ENCODE measurements at regions of chr2 and their contacts with region 1.

Region 1: DNA sequence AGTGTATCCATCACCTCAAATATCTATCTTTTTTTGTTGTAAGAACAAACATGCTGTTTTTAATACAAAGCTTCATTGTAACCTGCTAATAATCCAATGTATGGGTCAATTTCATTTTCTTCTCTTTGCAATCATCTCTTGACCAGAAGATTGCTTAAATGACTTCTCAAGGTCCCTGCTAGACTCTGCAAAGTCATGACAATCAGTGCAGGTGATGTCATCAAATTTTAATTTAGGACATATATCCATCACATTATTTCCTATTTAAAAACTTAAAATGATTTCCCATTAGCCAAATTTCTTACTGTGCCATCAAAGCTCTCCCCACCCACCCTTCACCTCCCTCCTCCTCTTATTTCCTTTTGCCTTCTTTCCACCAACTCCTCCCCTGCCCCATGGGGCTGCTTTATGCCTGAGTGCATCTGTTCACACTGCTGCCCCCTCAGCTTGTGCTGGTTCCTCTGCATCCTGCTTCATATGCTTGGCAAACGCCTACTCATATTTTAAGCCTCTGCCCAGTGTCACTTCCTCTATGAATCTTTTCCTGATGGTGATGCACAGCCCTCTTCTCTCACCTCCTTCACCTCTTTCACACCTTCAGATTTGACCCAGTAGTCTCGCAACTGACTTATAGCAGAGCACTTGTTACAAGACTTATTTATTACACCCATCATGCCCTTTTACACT is 20.3 kb downstream of the PLEK start:
- DNase-seq: peak; percentile 62
- H3K4me3 Mint-ChIP-seq: no peak overlapping the region
- H3K27ac Mint-ChIP-seq: no peak overlapping the region
- H3K4me1 Mint-ChIP-seq: peaks cover 41% of the 10 kb centered on the region
- H3K27me3 Mint-ChIP-seq: no peaks in the 10 kb centered on the region

Region 2: GRCh38 chr2:68362069-68362468 is 23.3 kb before region 1 on chr2:
- CTCF ChIA-PET with region 1: interaction called, 3 read pairs
- POLR2A ChIA-PET with region 1: no interaction called
- intact Hi-C with region 1: loop called (anchors 1 kb)
- DNase-seq: peak; percentile 87
- H3K4me3 Mint-ChIP-seq: peak overlapping the region; percentile 48
- H3K27ac Mint-ChIP-seq: no peak overlapping the region
- H3K4me1 Mint-ChIP-seq: peaks cover 12% of the 10 kb centered on the region
- H3K27me3 Mint-ChIP-seq: no peaks in the 10 kb centered on the region

Measured in activated CD4-positive, alpha-beta memory T cell treated with anti-CD3 and anti-CD28 coated beads for 36 hours (primary cell).